CD4-positive, alpha-beta memory T cell (primary cell): ENCODE measurements at regions of chrX and their contacts with region 1.

Region 1: GRCh38 chrX:48648336-48648751 is 35.3 kb upstream of the WAS start:
- DNase-seq: peak; percentile 46 to 62 (median 47)
- H3K4me3 ChIP-seq: no peak overlapping the region
- H3K4me3 Mint-ChIP-seq: no peak overlapping the region
- H3K27ac ChIP-seq: no peak overlapping the region
- H3K27ac Mint-ChIP-seq: peak overlapping the region in 4 of 7 donors; percentile 55 to 89 (median 74)
- H3K4me1 ChIP-seq: no peaks in the 10 kb centered on the region
- H3K4me1 Mint-ChIP-seq: peaks cover 0 to 8% (median 4%) of the 10 kb centered on the region in 4 donors
- H3K27me3 ChIP-seq: no peaks in the 10 kb centered on the region
- H3K27me3 Mint-ChIP-seq: no peaks in the 10 kb centered on the region

Region 2: DNA sequence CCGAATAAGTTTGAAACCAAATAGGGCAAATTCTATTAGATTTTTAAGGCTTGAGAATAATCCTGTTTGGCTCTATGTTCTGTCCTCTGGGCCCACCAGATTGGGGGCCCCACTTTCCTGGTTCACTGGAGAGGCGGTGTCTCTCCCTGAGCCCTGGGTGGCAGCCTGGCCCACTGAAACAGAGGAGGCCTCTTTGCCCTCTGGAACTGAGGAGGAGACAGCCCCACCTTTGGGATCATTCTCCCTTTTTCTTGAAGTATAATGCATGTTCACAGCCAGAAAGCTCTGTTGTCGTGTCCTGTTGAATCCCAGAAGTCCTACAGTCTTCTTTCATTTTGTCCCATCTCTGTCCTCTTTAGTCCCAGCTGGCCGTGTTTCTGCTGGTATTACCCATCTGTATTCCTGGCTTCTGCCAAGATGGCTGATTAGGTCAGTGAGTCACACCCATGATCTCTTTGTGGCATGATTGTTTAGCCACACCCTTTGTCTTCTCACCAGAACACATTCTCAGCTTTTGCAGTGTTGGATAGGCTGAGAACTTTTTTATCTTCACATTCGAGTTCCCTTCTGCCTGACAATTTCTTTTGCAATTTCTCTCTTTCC is 116.9 kb before region 1 on chrX:
- CTCF ChIA-PET with region 1: no interaction called
- POLR2A ChIA-PET with region 1: no interaction called
- intact Hi-C with region 1: no loop called
- DNase-seq: peak in 1 of 5 donors; percentile 7
- H3K4me3 ChIP-seq: no peak overlapping the region
- H3K4me3 Mint-ChIP-seq: peak overlapping the region in 1 of 8 donors; percentile 43
- H3K27ac ChIP-seq: no peak overlapping the region
- H3K27ac Mint-ChIP-seq: peak overlapping the region; percentile 6 to 94 (median 81)
- H3K4me1 ChIP-seq: peaks cover 10% of the 10 kb centered on the region
- H3K4me1 Mint-ChIP-seq: peaks cover 6 to 13% (median 10%) of the 10 kb centered on the region in 4 donors
- H3K27me3 ChIP-seq: no peaks in the 10 kb centered on the region
- H3K27me3 Mint-ChIP-seq: no peaks in the 10 kb centered on the region

Region 3: DNA sequence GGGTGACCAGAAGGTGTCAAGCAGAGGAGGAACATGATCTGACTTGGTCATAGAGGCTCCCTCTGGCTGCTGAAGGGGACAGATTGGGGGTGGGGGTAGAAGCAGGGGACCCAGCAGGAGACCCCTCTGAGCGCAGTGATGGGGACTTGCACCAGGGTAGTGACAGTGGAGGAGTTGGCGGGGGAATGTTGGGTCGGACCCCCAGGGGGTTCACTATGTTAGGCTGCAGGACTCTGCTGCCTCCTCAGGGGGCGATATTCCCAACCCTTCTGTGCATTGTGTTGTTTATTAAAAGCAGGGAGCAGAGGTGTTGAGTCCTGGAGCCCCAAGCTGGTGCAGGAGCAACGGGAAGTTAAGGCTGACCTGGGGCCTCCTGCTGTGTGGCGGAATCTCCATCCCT is 42.3 kb before region 1 on chrX:
- CTCF ChIA-PET with region 1: no interaction called
- POLR2A ChIA-PET with region 1: no interaction called
- intact Hi-C with region 1: no loop called
- DNase-seq: no peak
- H3K4me3 ChIP-seq: no peak overlapping the region
- H3K4me3 Mint-ChIP-seq: no peak overlapping the region
- H3K27ac ChIP-seq: no peak overlapping the region
- H3K27ac Mint-ChIP-seq: peak overlapping the region in 1 of 7 donors; percentile 2
- H3K4me1 ChIP-seq: no peaks in the 10 kb centered on the region
- H3K4me1 Mint-ChIP-seq: no peaks in the 10 kb centered on the region
- H3K27me3 ChIP-seq: no peaks in the 10 kb centered on the region
- H3K27me3 Mint-ChIP-seq: no peaks in the 10 kb centered on the region

Region 4: GRCh38 chrX:48616576-48616975 is 31.8 kb before region 1 on chrX:
- CTCF ChIA-PET with region 1: no interaction called
- POLR2A ChIA-PET with region 1: no interaction called
- intact Hi-C with region 1: no loop called
- DNase-seq: no peak
- H3K4me3 ChIP-seq: no peak overlapping the region
- H3K4me3 Mint-ChIP-seq: no peak overlapping the region
- H3K27ac ChIP-seq: no peak overlapping the region
- H3K27ac Mint-ChIP-seq: no peak overlapping the region
- H3K4me1 ChIP-seq: no peaks in the 10 kb centered on the region
- H3K4me1 Mint-ChIP-seq: peaks cover 0 to 1% (median 0%) of the 10 kb centered on the region in 4 donors
- H3K27me3 ChIP-seq: no peaks in the 10 kb centered on the region
- H3K27me3 Mint-ChIP-seq: peaks cover 0 to 3% of the 10 kb centered on the region in 2 donors

Region 5: GRCh38 chrX:48636776-48637175 is 11.6 kb before region 1 on chrX:
- CTCF ChIA-PET with region 1: interaction called, 11 read pairs
- POLR2A ChIA-PET with region 1: no interaction called
- intact Hi-C with region 1: no loop called
- DNase-seq: no peak
- H3K4me3 ChIP-seq: no peak overlapping the region
- H3K4me3 Mint-ChIP-seq: no peak overlapping the region
- H3K27ac ChIP-seq: no peak overlapping the region
- H3K27ac Mint-ChIP-seq: no peak overlapping the region
- H3K4me1 ChIP-seq: peaks cover 7% of the 10 kb centered on the region
- H3K4me1 Mint-ChIP-seq: peaks cover 0 to 9% (median under 1%) of the 10 kb centered on the region in 4 donors
- H3K27me3 ChIP-seq: no peaks in the 10 kb centered on the region
- H3K27me3 Mint-ChIP-seq: no peaks in the 10 kb centered on the region

Region 6: GRCh38 chrX:48891402-48892288 is 243.3 kb after region 1 on chrX:
- CTCF ChIA-PET with region 1: interaction called, 8 read pairs
- POLR2A ChIA-PET with region 1: interaction called, 3 read pairs
- intact Hi-C with region 1: loop called (anchors 2 kb)
- DNase-seq: peak; percentile 76 to 85 (median 78)
- H3K4me3 ChIP-seq: peak overlapping the region in 1 of 2 donors; percentile 49
- H3K4me3 Mint-ChIP-seq: peak overlapping the region; percentile 75 to 97 (median 82)
- H3K27ac ChIP-seq: peak overlapping the region; percentile 52
- H3K27ac Mint-ChIP-seq: peak overlapping the region in 6 of 7 donors; percentile 37 to 90 (median 74)
- H3K4me1 ChIP-seq: peaks cover 15% of the 10 kb centered on the region
- H3K4me1 Mint-ChIP-seq: peaks cover 10 to 30% (median 21%) of the 10 kb centered on the region in 4 donors
- H3K27me3 ChIP-seq: no peaks in the 10 kb centered on the region
- H3K27me3 Mint-ChIP-seq: peaks cover 0 to 1% of the 10 kb centered on the region in 2 donors

Region 7: DNA sequence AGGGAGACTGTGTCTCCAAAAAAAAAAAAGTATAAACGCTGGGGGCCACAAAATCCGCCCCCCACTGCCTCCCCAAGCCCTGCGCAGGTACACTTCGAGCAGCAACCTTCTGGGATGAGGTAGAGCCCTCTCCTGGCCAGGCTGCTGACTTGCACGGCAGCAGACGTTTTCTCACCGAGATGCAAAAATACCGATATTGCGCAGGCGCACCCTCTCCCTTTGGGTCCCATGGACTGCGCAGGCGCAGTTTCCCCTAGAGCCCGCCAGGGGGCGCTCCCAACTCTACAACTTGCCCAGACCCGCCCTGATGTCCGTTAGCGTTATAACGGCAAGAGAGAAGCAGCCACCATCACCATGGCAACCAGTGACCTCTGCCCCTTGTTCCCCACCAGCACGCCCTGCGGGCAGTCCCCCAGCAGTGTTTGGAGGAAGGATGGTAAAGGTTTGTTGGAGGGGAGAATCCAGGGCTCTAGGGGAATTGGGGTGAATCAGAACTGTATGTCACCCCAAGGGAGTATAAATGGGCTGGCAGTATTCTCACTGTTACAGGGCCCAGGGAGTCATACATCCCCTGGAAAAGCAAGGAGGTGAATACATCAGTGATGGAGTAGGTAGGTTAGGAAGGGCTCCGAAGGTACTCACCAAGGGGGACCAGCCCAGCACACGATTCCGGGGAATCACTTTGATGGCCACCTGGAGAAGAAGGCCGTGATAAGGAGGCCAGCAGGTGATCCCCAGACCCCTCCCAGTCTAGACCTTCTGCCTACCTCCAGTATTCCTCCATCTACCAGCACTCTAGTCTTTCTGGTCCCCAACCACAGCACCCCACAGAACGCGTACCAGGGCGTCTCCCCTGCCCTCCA is 269.0 kb after region 1 on chrX:
- CTCF ChIA-PET with region 1: interaction called, 18 read pairs
- POLR2A ChIA-PET with region 1: interaction called, 7 read pairs
- intact Hi-C with region 1: loop called (anchors 1 kb)
- DNase-seq: peak; percentile 90 to 93 (median 92)
- H3K4me3 ChIP-seq: peak overlapping the region; percentile 91 to 98
- H3K4me3 Mint-ChIP-seq: peak overlapping the region; percentile 93 to 98 (median 96)
- H3K27ac ChIP-seq: peak overlapping the region; percentile 88
- H3K27ac Mint-ChIP-seq: peak overlapping the region; percentile 87 to 97 (median 95)
- H3K4me1 ChIP-seq: peaks cover 67% of the 10 kb centered on the region
- H3K4me1 Mint-ChIP-seq: peaks cover 27 to 85% (median 56%) of the 10 kb centered on the region in 4 donors
- H3K27me3 ChIP-seq: no peaks in the 10 kb centered on the region
- H3K27me3 Mint-ChIP-seq: no peaks in the 10 kb centered on the region

Region 8: GRCh38 chrX:48945516-48946348 is 297.4 kb after region 1 on chrX:
- CTCF ChIA-PET with region 1: interaction called, 20 read pairs
- POLR2A ChIA-PET with region 1: interaction called, 3 read pairs
- intact Hi-C with region 1: loop called (anchors 1 kb)
- DNase-seq: peak; percentile 45 to 66 (median 62)
- H3K4me3 ChIP-seq: no peak overlapping the region
- H3K4me3 Mint-ChIP-seq: peak overlapping the region in 6 of 8 donors; percentile 11 to 64 (median 26)
- H3K27ac ChIP-seq: no peak overlapping the region
- H3K27ac Mint-ChIP-seq: peak overlapping the region; percentile 66 to 92 (median 79)
- H3K4me1 ChIP-seq: peaks cover 70% of the 10 kb centered on the region
- H3K4me1 Mint-ChIP-seq: peaks cover 34 to 63% (median 48%) of the 10 kb centered on the region in 4 donors
- H3K27me3 ChIP-seq: no peaks in the 10 kb centered on the region
- H3K27me3 Mint-ChIP-seq: no peaks in the 10 kb centered on the region